ENCODE measurements at regions of chr1 and their contacts with region 1.

Region 1: GRCh38 chr1:85707990-85708828 is at the start of gene ZNHIT6:
- DNase-seq: peak; percentile 97
- ATAC-seq: peak; percentile 90
- H3K4me3 ChIP-seq: peak within 1 kb of the TSS; percentile 92
- H3K27ac ChIP-seq: peak within 1 kb of the TSS; percentile 69
- H3K4me1 ChIP-seq: peaks cover 22% of the 10 kb centered on the region
- H3K27me3 ChIP-seq: no peaks in the 10 kb centered on the region
- CTCF ChIP-seq: peak; percentile 55
- total RNA-seq, gene ZNHIT6: 18.3 and 21.1 TPM in 2 replicates

Region 2: GRCh38 chr1:85734931-85735330 is 26.7 kb after region 1 on chr1:
- CTCF ChIA-PET with region 1: no interaction called
- POLR2A ChIA-PET with region 1: no interaction called
- intact Hi-C with region 1: no loop called
- DNase-seq: no peak
- ATAC-seq: no peak
- H3K4me3 ChIP-seq: no peak overlapping the region
- H3K27ac ChIP-seq: no peak overlapping the region
- H3K4me1 ChIP-seq: no peaks in the 10 kb centered on the region
- H3K27me3 ChIP-seq: no peaks in the 10 kb centered on the region
- CTCF ChIP-seq: no peak

Region 3: DNA sequence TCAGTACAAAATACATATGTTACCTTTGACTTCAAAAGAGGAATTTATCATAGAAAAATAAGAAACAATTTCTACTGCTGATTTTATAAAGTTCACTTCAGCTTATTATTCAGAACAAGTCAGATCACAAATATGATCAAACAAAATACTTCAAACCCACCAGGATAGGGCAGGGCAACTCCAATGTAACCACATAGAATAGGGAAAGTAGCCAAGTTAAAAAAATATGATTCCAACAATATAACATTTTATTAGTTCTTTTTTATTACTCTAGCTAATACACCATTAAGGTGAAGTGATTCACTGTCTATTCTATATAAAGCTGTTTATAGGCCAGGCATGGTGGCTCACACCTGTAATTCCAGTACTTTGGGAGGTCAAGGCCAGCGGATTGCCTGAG is 54.6 kb after region 1 on chr1:
- CTCF ChIA-PET with region 1: interaction called, 4 read pairs
- POLR2A ChIA-PET with region 1: interaction called, 4 read pairs
- intact Hi-C with region 1: loop called (anchors 1 kb)
- DNase-seq: peak; percentile 88
- ATAC-seq: peak; percentile 89
- H3K4me3 ChIP-seq: no peak overlapping the region
- H3K27ac ChIP-seq: peak overlapping the region; percentile 68
- H3K4me1 ChIP-seq: peaks cover 16% of the 10 kb centered on the region
- H3K27me3 ChIP-seq: no peaks in the 10 kb centered on the region
- CTCF ChIP-seq: no peak

Region 4: GRCh38 chr1:85801520-85801919 is 93.3 kb after region 1 on chr1:
- CTCF ChIA-PET with region 1: no interaction called
- POLR2A ChIA-PET with region 1: no interaction called
- intact Hi-C with region 1: loop called (anchors 1 kb)
- DNase-seq: peak; percentile 71
- ATAC-seq: peak; percentile 96
- H3K4me3 ChIP-seq: no peak overlapping the region
- H3K27ac ChIP-seq: peak overlapping the region; percentile 25
- H3K4me1 ChIP-seq: peaks cover 11% of the 10 kb centered on the region
- H3K27me3 ChIP-seq: no peaks in the 10 kb centered on the region
- CTCF ChIP-seq: no peak

Region 5: GRCh38 chr1:85884372-85885035 is 176.3 kb after region 1 on chr1:
- CTCF ChIA-PET with region 1: no interaction called
- POLR2A ChIA-PET with region 1: interaction called, 4 read pairs
- intact Hi-C with region 1: loop called (anchors 1 kb)
- DNase-seq: peak; percentile 61
- ATAC-seq: peak; percentile 84
- H3K4me3 ChIP-seq: no peak overlapping the region
- H3K27ac ChIP-seq: no peak overlapping the region
- H3K4me1 ChIP-seq: peaks cover 7% of the 10 kb centered on the region; the same call in 1 of the 2 replicates
- H3K27me3 ChIP-seq: no peaks in the 10 kb centered on the region
- CTCF ChIP-seq: peak; percentile 74